CD4-positive, alpha-beta memory T cell (primary cell): ENCODE measurements at regions of chr10 and their contacts with region 1.

Region 1: DNA sequence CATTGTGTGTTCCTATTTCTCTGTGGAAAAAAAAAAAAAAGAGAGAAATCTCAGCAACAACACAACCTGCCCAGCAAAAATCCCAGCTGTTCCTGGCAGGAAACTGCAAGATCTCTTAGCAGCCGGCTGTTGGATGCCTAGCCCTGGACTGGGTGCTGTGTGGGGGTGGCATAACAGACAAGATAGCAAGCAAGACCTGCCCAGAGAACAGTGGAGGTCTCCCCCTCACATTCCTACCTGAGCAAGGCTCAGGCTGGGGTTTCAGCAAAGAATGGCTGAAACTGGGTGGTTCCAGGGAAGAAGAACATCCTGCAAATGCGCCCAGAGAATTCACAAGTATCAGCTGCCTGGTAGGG is 248.8 kb upstream of the ZMIZ1 start:
- DNase-seq: no peak
- H3K4me3 ChIP-seq: no peak overlapping the region
- H3K4me3 Mint-ChIP-seq: no peak overlapping the region
- H3K27ac ChIP-seq: no peak overlapping the region
- H3K27ac Mint-ChIP-seq: no peak overlapping the region
- H3K4me1 ChIP-seq: no peaks in the 10 kb centered on the region
- H3K4me1 Mint-ChIP-seq: no peaks in the 10 kb centered on the region
- H3K27me3 ChIP-seq: no peaks in the 10 kb centered on the region
- H3K27me3 Mint-ChIP-seq: peaks cover 2 to 5% of the 10 kb centered on the region in 2 donors

Region 2: GRCh38 chr10:78787125-78787524 is 32.9 kb before region 1 on chr10:
- CTCF ChIA-PET with region 1: no interaction called
- POLR2A ChIA-PET with region 1: no interaction called
- intact Hi-C with region 1: loop called (anchors 1 kb)
- DNase-seq: no peak
- H3K4me3 ChIP-seq: no peak overlapping the region
- H3K4me3 Mint-ChIP-seq: no peak overlapping the region
- H3K27ac ChIP-seq: no peak overlapping the region
- H3K27ac Mint-ChIP-seq: no peak overlapping the region
- H3K4me1 ChIP-seq: no peaks in the 10 kb centered on the region
- H3K4me1 Mint-ChIP-seq: no peaks in the 10 kb centered on the region
- H3K27me3 ChIP-seq: no peaks in the 10 kb centered on the region
- H3K27me3 Mint-ChIP-seq: peaks cover 8 to 14% of the 10 kb centered on the region in 2 donors